ENCODE measurements at regions of chr19 and their contacts with region 1.

Region 1: DNA sequence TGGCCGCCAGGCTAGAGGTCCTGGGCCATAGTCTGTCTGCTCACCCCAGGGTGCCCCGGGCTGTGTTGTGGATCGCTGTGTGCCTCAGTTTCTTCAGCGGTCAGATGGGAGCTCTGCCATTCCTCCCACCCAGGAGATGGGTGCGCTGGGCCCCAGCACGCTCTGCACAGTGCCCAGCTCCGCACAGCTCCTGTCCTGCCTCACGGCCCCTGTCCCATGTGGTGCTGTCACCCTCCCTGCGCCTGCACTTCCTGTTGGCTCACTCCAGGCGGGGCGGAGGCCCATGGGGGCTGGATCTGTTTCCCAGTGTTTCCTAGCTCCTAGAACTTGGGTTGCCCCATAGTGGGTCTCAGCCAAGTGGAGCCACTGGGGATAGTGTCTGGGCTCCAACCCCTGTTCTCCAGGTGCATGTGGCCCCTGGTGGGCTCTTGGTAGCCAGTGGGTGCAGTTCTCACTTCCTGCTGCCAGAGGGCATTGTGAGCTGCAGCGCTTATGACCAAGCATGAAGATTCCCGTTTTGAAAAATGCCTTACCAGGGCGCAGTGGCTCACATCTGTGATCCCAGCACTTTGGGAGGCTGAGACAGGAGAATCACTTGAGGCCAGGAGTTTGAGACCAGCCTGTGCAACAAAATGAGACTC is 69.8 kb downstream of the KDM4B start:
- DNase-seq: no peak
- ATAC-seq: peak; percentile 50
- H3K4me3 ChIP-seq: no peak overlapping the region
- H3K4me3 Mint-ChIP-seq: no peak overlapping the region
- H3K27ac ChIP-seq: no peak overlapping the region
- H3K27ac Mint-ChIP-seq: peak overlapping the region in 2 of 9 donors; percentile 13 to 26
- H3K4me1 ChIP-seq: no peaks in the 10 kb centered on the region
- H3K4me1 Mint-ChIP-seq: peaks cover 0 to 10% (median 0%) of the 10 kb centered on the region in 7 donors
- H3K27me3 ChIP-seq: no peaks in the 10 kb centered on the region
- H3K27me3 Mint-ChIP-seq: no peaks in the 10 kb centered on the region

Region 2: GRCh38 chr19:4821265-4821664 is 217.5 kb before region 1 on chr19:
- CTCF ChIA-PET with region 1: no interaction called
- POLR2A ChIA-PET with region 1: no interaction called
- intact Hi-C with region 1: no loop called
- DNase-seq: no peak
- ATAC-seq: no peak
- H3K4me3 ChIP-seq: no peak overlapping the region
- H3K4me3 Mint-ChIP-seq: no peak overlapping the region
- H3K27ac ChIP-seq: no peak overlapping the region
- H3K27ac Mint-ChIP-seq: peak overlapping the region in 1 of 9 donors; percentile 10
- H3K4me1 ChIP-seq: no peaks in the 10 kb centered on the region
- H3K4me1 Mint-ChIP-seq: peaks cover 0 to 5% (median 0%) of the 10 kb centered on the region in 7 donors
- H3K27me3 ChIP-seq: no peaks in the 10 kb centered on the region
- H3K27me3 Mint-ChIP-seq: no peaks in the 10 kb centered on the region

Region 3: DNA sequence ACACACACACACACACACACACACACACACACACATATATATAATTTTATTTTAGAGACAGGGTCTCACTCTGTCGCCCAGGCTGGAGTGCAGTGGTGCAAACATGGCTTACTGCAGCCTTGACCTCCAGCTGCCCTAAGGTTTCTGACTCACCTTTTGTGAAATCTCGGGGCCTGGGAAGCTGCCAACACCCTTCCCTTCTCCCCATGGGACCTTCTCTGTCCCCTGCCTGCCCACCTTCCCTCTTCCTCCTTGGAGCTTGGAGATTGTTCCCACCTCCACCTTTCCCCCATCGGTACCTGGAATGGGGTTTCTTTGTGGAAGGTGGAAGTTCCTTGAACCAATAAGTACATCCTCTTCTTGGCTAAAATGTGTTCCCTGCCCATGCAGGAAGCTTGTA is 142.4 kb before region 1 on chr19:
- CTCF ChIA-PET with region 1: no interaction called
- POLR2A ChIA-PET with region 1: no interaction called
- intact Hi-C with region 1: no loop called
- DNase-seq: no peak
- ATAC-seq: no peak
- H3K4me3 ChIP-seq: no peak overlapping the region
- H3K4me3 Mint-ChIP-seq: no peak overlapping the region
- H3K27ac ChIP-seq: no peak overlapping the region
- H3K27ac Mint-ChIP-seq: no peak overlapping the region
- H3K4me1 ChIP-seq: no peaks in the 10 kb centered on the region
- H3K4me1 Mint-ChIP-seq: peaks cover 0 to 9% (median 3%) of the 10 kb centered on the region in 7 donors
- H3K27me3 ChIP-seq: no peaks in the 10 kb centered on the region
- H3K27me3 Mint-ChIP-seq: no peaks in the 10 kb centered on the region

Region 4: DNA sequence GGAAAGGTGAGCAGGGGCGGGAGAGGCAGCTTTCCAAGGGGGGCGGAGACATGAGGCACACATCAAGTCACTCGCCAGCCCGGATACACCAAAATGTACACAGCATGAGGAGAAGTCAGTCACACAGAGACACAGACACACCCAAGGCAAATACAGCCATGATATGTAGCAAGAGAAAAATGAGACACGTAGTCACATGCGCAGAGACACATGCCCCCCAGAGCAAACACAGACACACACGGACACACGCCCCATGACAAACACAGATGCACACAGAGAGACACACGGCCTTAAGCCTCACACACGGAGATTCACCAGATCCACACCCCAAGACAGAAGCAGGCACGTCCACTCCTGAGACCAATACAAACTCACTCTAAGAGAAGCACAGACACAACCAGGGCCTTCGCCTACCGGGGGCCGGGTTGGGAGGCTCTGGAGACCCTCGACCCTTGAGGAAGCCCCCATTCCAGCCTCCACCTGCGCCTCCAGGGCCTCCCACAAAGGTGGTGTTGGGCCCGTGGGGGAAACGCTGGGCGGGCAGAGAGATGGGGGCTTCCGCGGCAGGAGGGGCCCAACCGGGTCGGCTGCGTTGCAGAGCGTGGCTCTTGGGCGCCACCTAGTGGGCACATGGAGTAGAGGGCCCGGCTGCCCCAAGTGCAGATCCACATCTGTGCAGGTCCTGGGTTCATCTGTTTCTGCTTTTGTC is 539.2 kb after region 1 on chr19:
- CTCF ChIA-PET with region 1: no interaction called
- POLR2A ChIA-PET with region 1: no interaction called
- intact Hi-C with region 1: loop called in 1 of 2 experiments (anchors 2 kb)
- DNase-seq: peak; percentile 41 to 80 (median 65)
- ATAC-seq: peak; percentile 95
- H3K4me3 ChIP-seq: no peak overlapping the region
- H3K4me3 Mint-ChIP-seq: peak overlapping the region in 4 of 10 donors; percentile 6 to 33 (median 16)
- H3K27ac ChIP-seq: no peak overlapping the region
- H3K27ac Mint-ChIP-seq: peak overlapping the region in 3 of 9 donors; percentile 21 to 30 (median 25)
- H3K4me1 ChIP-seq: peaks cover 0 to 5% of the 10 kb centered on the region in 2 donors
- H3K4me1 Mint-ChIP-seq: peaks cover 4 to 10% (median 7%) of the 10 kb centered on the region in 7 donors
- H3K27me3 ChIP-seq: no peaks in the 10 kb centered on the region
- H3K27me3 Mint-ChIP-seq: no peaks in the 10 kb centered on the region

Measured in naive thymus-derived CD4-positive, alpha-beta T cell (primary cell).